Activated naive CD4-positive, alpha-beta T cell treated with anti-CD3 and anti-CD28 coated beads for 36 hours (primary cell): ENCODE measurements at regions of chr4 and their contacts with region 1.

Region 1: DNA sequence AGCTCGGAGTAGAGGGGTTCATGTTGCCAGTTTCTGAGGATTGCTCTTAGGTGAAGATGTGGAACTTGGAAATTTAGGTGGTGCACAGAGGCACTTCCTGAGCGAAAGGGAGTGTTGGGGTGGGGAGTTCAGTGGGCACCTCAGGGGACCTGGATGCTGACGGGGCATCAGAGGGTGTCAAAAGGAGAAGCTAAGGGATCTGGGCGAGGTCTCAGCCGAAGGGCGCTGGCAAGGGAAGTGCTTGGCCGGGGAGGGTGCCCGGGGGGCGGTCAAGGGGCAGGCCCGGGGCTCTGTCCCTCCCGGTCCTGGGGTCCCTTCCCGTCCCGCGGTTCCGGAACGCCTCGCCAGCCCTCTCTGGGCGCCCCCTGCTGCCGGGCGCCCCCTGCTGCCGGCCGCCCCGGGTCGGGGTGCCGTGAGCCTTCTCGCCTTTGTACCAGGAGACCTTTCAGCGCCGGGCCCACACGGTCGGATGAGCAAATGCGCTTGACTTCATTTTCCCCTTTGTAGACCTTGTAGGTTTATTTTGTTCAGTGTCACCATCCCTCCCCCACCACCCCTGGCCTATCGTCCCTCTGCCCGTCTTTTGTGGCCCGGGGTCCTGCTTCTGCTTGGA is 3.0 kb upstream of the PHOX2B start:
- DNase-seq: no peak
- H3K4me3 Mint-ChIP-seq: no peak overlapping the region
- H3K27ac Mint-ChIP-seq: no peak overlapping the region
- H3K4me1 Mint-ChIP-seq: peaks cover 4% of the 10 kb centered on the region
- H3K27me3 Mint-ChIP-seq: peaks cover 81% of the 10 kb centered on the region

Region 2: GRCh38 chr4:41427306-41427882 is 324.2 kb before region 1 on chr4:
- CTCF ChIA-PET with region 1: no interaction called
- intact Hi-C with region 1: no loop called
- DNase-seq: no peak
- H3K4me3 Mint-ChIP-seq: no peak overlapping the region
- H3K27ac Mint-ChIP-seq: no peak overlapping the region
- H3K4me1 Mint-ChIP-seq: no peaks in the 10 kb centered on the region
- H3K27me3 Mint-ChIP-seq: peaks cover 5% of the 10 kb centered on the region

Region 3: DNA sequence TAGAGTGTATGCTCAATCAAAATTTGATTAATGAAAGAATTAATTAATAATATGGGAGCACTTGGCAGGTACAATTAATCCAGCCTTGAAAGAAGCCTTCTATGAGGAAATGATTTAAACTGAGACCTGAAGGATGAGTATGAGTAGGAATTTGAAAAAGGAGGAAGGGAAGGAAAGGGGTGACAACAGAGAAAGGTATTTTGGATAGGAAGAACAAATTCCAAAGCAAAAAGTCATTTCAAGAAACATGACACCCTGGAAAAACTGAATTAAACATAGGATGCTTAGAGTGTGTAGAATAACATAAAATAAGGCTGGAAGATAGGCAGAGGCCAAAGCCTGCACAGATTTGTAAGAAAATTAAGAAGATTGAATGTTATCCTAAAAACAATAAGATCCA is 32.6 kb before region 1 on chr4:
- CTCF ChIA-PET with region 1: no interaction called
- intact Hi-C with region 1: no loop called
- DNase-seq: no peak
- H3K4me3 Mint-ChIP-seq: no peak overlapping the region
- H3K27ac Mint-ChIP-seq: no peak overlapping the region
- H3K4me1 Mint-ChIP-seq: no peaks in the 10 kb centered on the region
- H3K27me3 Mint-ChIP-seq: peaks cover 8% of the 10 kb centered on the region

Region 4: GRCh38 chr4:41865306-41865980 is 113.9 kb after region 1 on chr4:
- CTCF ChIA-PET with region 1: no interaction called
- intact Hi-C with region 1: loop called (anchors 5 kb)
- DNase-seq: no peak
- H3K4me3 Mint-ChIP-seq: no peak overlapping the region
- H3K27ac Mint-ChIP-seq: no peak overlapping the region
- H3K4me1 Mint-ChIP-seq: peaks cover 15% of the 10 kb centered on the region
- H3K27me3 Mint-ChIP-seq: peaks cover 57% of the 10 kb centered on the region

Region 5: DNA sequence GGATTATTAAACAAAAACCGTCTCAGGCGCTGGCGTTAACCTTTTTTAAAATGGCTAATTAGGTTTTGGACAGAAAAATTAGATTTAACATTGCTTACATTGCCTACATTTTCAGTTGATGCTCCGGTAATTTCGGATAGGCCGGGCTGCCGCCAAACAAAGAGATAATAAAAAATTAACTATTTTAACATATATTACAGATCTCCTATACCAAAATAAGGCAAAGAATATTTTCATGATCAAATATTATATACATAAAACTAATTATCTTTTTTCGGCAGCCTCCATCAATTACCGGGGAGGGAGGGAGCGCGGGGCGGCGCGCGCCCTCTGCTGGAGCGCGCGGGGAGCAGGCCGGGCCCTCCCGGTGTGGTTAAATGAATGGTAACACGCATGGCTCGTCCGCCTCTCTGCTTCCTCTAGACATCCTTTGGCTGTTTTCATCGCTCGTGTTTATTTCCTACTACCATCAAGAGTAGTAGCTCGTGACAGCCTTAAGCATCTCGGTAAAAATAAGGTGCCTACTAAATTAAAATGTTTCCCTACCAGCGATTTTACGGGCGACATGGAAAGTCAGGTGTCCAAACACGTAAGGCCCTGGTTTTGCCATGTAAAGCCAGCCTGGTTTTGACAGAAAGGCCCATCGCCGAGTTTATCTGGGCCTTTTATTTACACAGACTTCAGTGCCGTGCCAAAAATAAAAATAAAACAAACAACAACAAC is 131.2 kb after region 1 on chr4:
- CTCF ChIA-PET with region 1: interaction called, 3 read pairs
- intact Hi-C with region 1: loop called (anchors 1 kb)
- DNase-seq: peak; percentile 63
- H3K4me3 Mint-ChIP-seq: peak overlapping the region; percentile 39
- H3K27ac Mint-ChIP-seq: no peak overlapping the region
- H3K4me1 Mint-ChIP-seq: peaks cover 17% of the 10 kb centered on the region
- H3K27me3 Mint-ChIP-seq: peaks cover 44% of the 10 kb centered on the region